HCT116 (cell line): ENCODE measurements at regions of chr18 and their contacts with region 1.

Region 1: GRCh38 chr18:58400337-58400870 is 228.5 kb downstream of the ALPK2 start:
- DNase-seq: no peak
- ATAC-seq: no peak
- H3K4me3 ChIP-seq: no peak overlapping the region
- H3K27ac ChIP-seq: no peak overlapping the region
- H3K4me1 ChIP-seq: no peaks in the 10 kb centered on the region
- H3K27me3 ChIP-seq: no peaks in the 10 kb centered on the region
- CTCF ChIP-seq: 0 out of 6 replicates have a peak, but pooled peaks of 1 of the 3 experiments have one; percentile 0
- POLR2A ChIP-seq: no peak
- RAD21 ChIP-seq: no peak

Region 2: GRCh38 chr18:58447402-58448095 is 47.1 kb after region 1 on chr18:
- CTCF ChIA-PET with region 1: no interaction called
- POLR2A ChIA-PET with region 1: no interaction called
- RAD21 ChIA-PET with region 1: no interaction called
- intact Hi-C with region 1: no loop called
- DNase-seq: no peak
- ATAC-seq: no peak
- H3K4me3 ChIP-seq: no peak overlapping the region
- H3K27ac ChIP-seq: no peak overlapping the region
- H3K4me1 ChIP-seq: peaks cover 0 to 11% of the 10 kb centered on the region in 2 experiments; a peak in 2 of 4 replicates
- H3K27me3 ChIP-seq: no peaks in the 10 kb centered on the region
- CTCF ChIP-seq: no peak
- POLR2A ChIP-seq: no peak
- RAD21 ChIP-seq: no peak

Region 3: DNA sequence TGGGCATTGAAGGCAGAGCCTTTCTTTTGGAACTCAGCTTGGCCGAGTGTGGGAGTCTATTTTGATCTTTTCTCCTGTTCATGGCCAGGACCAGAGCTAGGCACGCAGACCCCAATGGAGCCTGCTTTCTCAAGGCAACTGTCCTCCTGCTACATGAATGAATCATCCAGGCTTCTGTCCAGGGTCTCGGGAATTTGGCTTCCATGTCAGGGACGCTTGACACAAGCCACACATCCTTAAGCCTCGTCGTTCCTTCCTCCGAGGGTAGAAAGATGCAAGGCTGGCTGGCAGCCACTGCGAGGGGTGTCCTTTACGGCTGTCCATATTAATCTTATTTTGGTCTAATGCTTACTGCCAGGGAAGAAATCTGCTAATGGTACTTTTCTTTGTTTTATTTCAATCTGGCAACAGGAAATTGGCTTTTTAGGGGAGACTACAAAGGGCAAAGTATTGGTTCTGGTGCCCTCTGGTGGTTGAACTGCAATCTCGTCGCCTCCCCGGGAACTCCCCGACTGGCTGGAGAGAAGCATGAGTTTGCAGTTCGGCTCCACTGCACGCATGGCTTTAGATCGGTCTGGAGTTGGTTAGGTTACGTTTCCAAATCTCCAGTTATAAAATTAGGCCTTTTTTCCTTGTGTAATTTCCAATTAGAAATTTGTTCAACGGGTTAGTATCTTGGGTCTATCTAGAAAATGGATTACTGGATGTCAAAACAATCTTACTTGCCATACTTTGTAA is 93.3 kb after region 1 on chr18:
- CTCF ChIA-PET with region 1: interaction called, 5 read pairs
- POLR2A ChIA-PET with region 1: no interaction called
- RAD21 ChIA-PET with region 1: interaction called in 1 of 2 experiments, 3 read pairs
- intact Hi-C with region 1: loop called (anchors 1 kb)
- DNase-seq: peak; percentile 56
- ATAC-seq: peak; percentile 94
- H3K4me3 ChIP-seq: no peak overlapping the region
- H3K27ac ChIP-seq: no peak overlapping the region
- H3K4me1 ChIP-seq: peaks cover 0 to 4% of the 10 kb centered on the region in 2 experiments; a peak in 2 of 4 replicates
- H3K27me3 ChIP-seq: peaks cover 6% of the 10 kb centered on the region; the same call in 1 of the 2 replicates
- CTCF ChIP-seq: peak; percentile 77 to 93 (median 81)
- POLR2A ChIP-seq: no peak
- RAD21 ChIP-seq: peak; percentile 86